Activated T-helper 1 cell treated with anti-CD3 and anti-CD28 coated beads, Interleukin-12 subunit alpha, Interleukin-12 subunit beta, Interleukin-2, Interleukin-4 antibody, amounts not matched to agents 30 ng/mL and 10 ng/mL and 1 ng/mL, durations not matched to agents 14 hours and 24 hours and 36 hours (primary cell): ENCODE measurements at regions of chr13 and their contacts with region 1.

Region 1: DNA sequence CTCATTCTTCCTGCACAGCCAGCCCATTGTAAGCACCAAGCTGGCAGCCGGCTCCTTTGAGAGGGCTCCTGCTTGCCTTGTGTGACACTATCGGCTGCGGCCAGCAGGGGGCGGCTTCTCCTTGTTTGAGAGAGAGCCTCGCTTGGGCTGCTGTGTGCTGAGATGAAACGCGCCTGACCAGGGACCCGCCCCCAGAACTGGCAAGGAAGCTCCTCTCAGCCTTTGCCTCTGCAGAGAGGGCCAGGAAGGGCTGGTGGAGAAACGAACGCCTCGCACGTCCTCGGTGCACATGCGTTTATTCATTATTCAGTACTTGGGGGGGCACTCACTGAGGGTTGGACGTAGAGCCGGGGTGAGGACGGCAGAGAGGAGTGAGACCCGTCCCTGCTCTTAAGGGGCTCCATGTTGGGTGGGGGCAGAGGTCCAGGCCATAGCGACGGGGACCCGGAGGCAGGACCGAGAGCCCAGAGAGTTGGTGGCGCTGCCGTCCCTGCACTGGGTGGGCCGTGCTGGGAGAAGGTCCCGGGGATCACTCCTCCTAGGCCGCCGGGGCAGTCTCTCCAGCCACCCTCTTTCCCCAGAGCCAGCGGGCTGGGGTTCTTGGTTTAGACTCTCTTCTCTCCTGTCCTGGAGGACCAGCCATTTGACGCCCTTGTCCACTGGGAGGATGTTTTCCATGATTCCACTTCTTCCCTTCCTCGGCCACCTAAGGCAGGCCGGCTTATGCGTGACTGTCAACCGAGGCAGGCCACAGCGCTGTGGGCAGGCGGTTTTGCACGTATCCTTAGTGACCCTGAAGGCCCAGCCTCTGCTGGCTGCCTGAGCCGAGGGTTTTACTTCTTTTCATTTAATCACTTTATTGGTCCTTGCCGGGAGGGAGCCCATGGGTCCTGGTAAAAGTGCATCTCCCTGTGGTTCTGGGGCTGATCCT is 174.5 kb downstream of the KATNAL1 start:
- DNase-seq: peak; percentile 92
- H3K4me3 Mint-ChIP-seq: no peak overlapping the region
- H3K27ac Mint-ChIP-seq: peak overlapping the region; percentile 67
- H3K4me1 Mint-ChIP-seq: peaks cover 18% of the 10 kb centered on the region
- H3K27me3 Mint-ChIP-seq: no peaks in the 10 kb centered on the region

Region 2: GRCh38 chr13:30158774-30159445 is 26.0 kb after region 1 on chr13:
- intact Hi-C with region 1: loop called (anchors 1 kb)
- DNase-seq: no peak
- H3K4me3 Mint-ChIP-seq: peak overlapping the region; percentile 23
- H3K27ac Mint-ChIP-seq: peak overlapping the region; percentile 78
- H3K4me1 Mint-ChIP-seq: peaks cover 43% of the 10 kb centered on the region
- H3K27me3 Mint-ChIP-seq: peaks cover under 1% of the 10 kb centered on the region

Region 3: DNA sequence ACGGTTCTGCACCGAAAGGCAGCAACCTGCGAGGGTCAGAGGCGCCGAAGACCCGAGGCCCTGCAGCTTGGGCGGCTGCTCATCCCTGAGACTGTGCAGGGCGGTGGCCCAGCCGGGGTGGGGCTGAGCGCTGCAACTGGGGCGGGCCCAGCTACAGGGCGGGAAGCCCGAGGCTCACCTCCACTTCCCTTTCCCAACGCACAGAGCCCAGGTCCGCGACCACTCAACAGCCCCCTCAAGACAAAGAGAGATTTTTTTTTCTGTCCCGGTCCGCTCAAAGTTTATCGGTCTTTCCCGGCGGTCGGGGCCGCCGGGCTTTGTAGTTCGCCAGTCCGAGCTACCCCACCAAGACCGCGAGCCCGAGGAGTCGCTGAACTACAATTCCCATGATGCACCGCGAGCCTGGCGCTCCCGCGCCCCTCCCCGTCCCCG is 173.9 kb after region 1 on chr13:
- intact Hi-C with region 1: loop called (anchors 1 kb)
- DNase-seq: peak; percentile 90
- H3K4me3 Mint-ChIP-seq: peak overlapping the region; percentile 88
- H3K27ac Mint-ChIP-seq: peak overlapping the region; percentile 84
- H3K4me1 Mint-ChIP-seq: peaks cover 65% of the 10 kb centered on the region
- H3K27me3 Mint-ChIP-seq: no peaks in the 10 kb centered on the region

Region 4: DNA sequence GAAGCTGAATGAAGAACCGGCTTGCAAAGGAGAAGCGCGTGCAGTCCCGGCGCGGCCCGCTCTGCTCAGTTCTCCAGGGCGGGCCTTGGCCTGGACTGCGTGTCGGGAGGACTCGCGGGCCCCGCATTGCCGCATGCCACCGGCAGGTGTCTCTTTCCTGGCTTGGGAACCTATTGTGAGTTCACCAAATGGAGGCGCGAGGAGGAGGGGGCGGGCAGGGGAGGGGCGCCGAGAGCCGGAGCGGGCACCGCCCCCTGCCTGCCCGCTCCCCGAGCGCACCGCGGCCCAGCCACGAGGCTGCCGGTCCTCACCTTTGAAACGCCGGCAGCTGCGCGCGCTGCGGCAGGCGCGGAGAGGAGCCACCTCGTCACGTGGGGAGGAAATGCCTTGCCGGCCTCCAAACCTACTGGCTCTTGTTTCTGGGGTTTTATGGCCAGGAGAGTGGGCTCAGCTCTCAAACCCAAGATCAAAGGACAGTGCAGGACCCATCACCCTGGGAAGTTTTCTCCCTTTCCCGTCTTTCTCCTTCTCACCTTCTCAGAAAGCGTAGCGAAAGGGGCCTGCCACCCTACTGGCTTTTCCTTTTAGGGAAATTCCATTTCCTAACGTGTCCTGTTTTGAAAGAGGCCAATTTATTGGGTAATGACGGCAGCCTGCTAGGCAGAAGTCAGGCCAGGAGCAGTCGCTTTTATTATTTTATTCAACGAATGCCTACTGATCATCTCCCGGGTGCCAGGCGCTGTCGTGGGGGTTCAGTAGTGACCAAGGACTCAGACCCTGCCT is 275.6 kb after region 1 on chr13:
- intact Hi-C with region 1: loop called (anchors 1 kb)
- DNase-seq: peak; percentile 88
- H3K4me3 Mint-ChIP-seq: peak overlapping the region; percentile 72
- H3K27ac Mint-ChIP-seq: peak overlapping the region; percentile 79
- H3K4me1 Mint-ChIP-seq: peaks cover 36% of the 10 kb centered on the region
- H3K27me3 Mint-ChIP-seq: peaks cover 10% of the 10 kb centered on the region

Region 5: GRCh38 chr13:30581582-30581981 is 448.7 kb after region 1 on chr13:
- intact Hi-C with region 1: loop called (anchors 2 kb)
- DNase-seq: no peak
- H3K4me3 Mint-ChIP-seq: no peak overlapping the region
- H3K27ac Mint-ChIP-seq: no peak overlapping the region
- H3K4me1 Mint-ChIP-seq: peaks cover 14% of the 10 kb centered on the region
- H3K27me3 Mint-ChIP-seq: peaks cover 28% of the 10 kb centered on the region

Region 6: GRCh38 chr13:30679483-30680330 is 546.8 kb after region 1 on chr13:
- intact Hi-C with region 1: no loop called
- DNase-seq: peak; percentile 17
- H3K4me3 Mint-ChIP-seq: no peak overlapping the region
- H3K27ac Mint-ChIP-seq: no peak overlapping the region
- H3K4me1 Mint-ChIP-seq: peaks cover 22% of the 10 kb centered on the region
- H3K27me3 Mint-ChIP-seq: peaks cover 19% of the 10 kb centered on the region

Region 7: GRCh38 chr13:30865123-30866049 is 732.5 kb after region 1 on chr13:
- intact Hi-C with region 1: loop called (anchors 1 kb)
- DNase-seq: peak; percentile 9
- H3K4me3 Mint-ChIP-seq: no peak overlapping the region
- H3K27ac Mint-ChIP-seq: no peak overlapping the region
- H3K4me1 Mint-ChIP-seq: no peaks in the 10 kb centered on the region
- H3K27me3 Mint-ChIP-seq: peaks cover 11% of the 10 kb centered on the region

Region 8: DNA sequence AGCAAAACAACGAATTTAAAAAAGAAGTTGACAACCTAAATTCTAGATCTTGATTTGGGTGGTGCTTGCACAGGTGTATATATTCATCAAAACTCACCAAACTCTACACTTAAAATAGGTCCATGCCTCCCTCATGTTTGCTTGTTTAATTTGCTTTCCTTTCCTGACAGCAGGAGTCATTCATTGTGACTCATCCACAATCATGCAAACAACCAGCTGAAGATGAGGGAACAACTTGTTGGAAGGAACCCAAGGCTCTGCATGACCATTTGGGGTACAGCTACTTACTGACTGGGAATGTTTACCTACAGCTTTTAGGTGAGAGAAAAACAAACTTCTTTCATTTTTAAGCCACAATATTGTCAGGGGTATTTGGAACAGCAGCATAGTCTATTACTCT is 1703.0 kb after region 1 on chr13:
- intact Hi-C with region 1: no loop called
- DNase-seq: no peak
- H3K4me3 Mint-ChIP-seq: no peak overlapping the region
- H3K27ac Mint-ChIP-seq: no peak overlapping the region
- H3K4me1 Mint-ChIP-seq: no peaks in the 10 kb centered on the region
- H3K27me3 Mint-ChIP-seq: peaks cover 6% of the 10 kb centered on the region